Upper lobe of right lung (tissue), 1 donor: ENCODE measurements at regions of chr4 and their contacts with region 1.

Region 1: GRCh38 chr4:48963042-48963679 is 22.9 kb upstream of the CWH43 start:
- DNase-seq: no peak
- ATAC-seq: peak; percentile 98
- H3K4me3 ChIP-seq: no peak overlapping the region
- H3K27ac ChIP-seq: no peak overlapping the region
- H3K4me1 ChIP-seq: no peaks in the 10 kb centered on the region
- H3K27me3 ChIP-seq: no peaks in the 10 kb centered on the region
- CTCF ChIP-seq: peak; percentile 96

Region 2: DNA sequence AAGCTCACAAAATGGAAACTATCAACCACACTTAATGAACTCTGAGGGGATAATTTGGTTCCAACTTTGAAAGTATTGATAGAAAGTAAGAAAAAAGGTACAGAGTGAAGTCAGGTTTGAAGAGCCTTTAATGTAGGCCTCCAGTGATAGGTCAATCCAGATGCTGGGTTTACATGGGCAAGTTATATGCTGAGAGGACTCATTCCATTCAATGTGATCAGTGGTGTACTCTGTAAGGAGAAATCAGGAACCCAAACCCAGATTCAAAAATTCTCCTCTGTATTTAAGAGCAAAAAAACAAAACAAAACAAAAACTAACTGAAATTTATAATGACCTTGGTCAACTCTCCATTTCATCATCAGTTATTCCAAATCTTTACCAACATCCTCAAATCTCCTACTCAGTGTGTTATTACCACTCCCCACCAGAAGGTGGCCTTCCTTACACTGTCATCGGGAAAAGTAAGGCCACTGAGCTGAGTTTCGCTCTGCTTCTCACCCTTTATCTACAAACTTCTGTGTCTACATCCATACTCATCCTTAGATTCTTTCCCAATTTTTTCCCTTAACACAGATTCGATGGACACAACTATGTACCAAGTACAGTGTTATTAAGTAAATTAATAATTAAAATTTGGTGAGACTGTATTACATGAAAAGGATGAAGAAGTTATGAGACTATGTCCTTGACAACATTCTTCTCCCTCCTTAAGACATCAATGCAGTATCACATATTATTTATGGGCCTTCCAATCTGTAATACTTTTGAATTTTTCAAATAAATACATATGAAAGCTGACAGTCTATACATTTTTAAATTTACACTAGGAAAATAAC is 384.8 kb before region 1 on chr4:
- intact Hi-C with region 1: loop called (anchors 5 kb)
- DNase-seq: no peak
- ATAC-seq: peak; percentile 96
- H3K4me3 ChIP-seq: no peak overlapping the region
- H3K27ac ChIP-seq: no peak overlapping the region
- H3K4me1 ChIP-seq: no peaks in the 10 kb centered on the region
- H3K27me3 ChIP-seq: no peaks in the 10 kb centered on the region
- CTCF ChIP-seq: peak; percentile 90

Region 3: GRCh38 chr4:48727666-48728459 is 235.3 kb before region 1 on chr4:
- intact Hi-C with region 1: no loop called
- DNase-seq: no peak
- ATAC-seq: no peak
- H3K4me3 ChIP-seq: no peak overlapping the region
- H3K27ac ChIP-seq: no peak overlapping the region
- H3K4me1 ChIP-seq: peaks cover 25% of the 10 kb centered on the region
- H3K27me3 ChIP-seq: no peaks in the 10 kb centered on the region
- CTCF ChIP-seq: no peak

Region 4: GRCh38 chr4:49018718-49019295 is 55.6 kb after region 1 on chr4:
- intact Hi-C with region 1: no loop called
- DNase-seq: no peak
- ATAC-seq: no peak
- H3K4me3 ChIP-seq: no peak overlapping the region
- H3K27ac ChIP-seq: no peak overlapping the region
- H3K4me1 ChIP-seq: no peaks in the 10 kb centered on the region
- H3K27me3 ChIP-seq: no peaks in the 10 kb centered on the region
- CTCF ChIP-seq: no peak

Region 5: DNA sequence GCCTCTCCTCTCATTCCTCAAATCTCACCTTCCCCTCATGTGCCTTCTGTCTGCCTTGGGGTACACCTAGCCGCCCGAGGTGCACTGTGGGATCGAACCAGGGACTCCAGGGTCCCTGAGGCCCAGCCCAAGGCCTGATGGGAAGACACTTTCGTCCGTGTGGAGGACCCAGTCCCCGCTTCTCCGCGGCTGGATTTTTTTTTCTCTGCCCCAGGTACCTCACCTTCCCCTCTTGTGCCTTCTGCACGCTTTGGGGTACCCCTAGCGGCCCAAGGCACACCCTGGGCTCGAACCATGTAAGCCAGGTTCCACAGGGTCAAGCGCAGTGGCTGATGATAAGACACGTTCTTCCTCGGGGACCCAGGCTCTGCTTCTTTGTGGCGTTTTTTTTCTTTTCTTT is 553.6 kb after region 1 on chr4:
- intact Hi-C with region 1: no loop called
- DNase-seq: peak; percentile 61
- ATAC-seq: no peak
- H3K4me3 ChIP-seq: no peak overlapping the region
- H3K27ac ChIP-seq: no peak overlapping the region
- H3K4me1 ChIP-seq: no peaks in the 10 kb centered on the region
- H3K27me3 ChIP-seq: no peaks in the 10 kb centered on the region
- CTCF ChIP-seq: no peak